ENCODE measurements at regions of chr1 and their contacts with region 1.

Region 1: GRCh38 chr1:176178316-176178715 is 28.8 kb downstream of the COP1 start:
- DNase-seq: peak; percentile 12
- H3K4me3 ChIP-seq: no peak overlapping the region
- H3K27ac ChIP-seq: no peak overlapping the region
- H3K4me1 ChIP-seq: peaks cover 8% of the 10 kb centered on the region
- H3K27me3 ChIP-seq: no peaks in the 10 kb centered on the region
- CTCF ChIP-seq: no peak

Region 2: DNA sequence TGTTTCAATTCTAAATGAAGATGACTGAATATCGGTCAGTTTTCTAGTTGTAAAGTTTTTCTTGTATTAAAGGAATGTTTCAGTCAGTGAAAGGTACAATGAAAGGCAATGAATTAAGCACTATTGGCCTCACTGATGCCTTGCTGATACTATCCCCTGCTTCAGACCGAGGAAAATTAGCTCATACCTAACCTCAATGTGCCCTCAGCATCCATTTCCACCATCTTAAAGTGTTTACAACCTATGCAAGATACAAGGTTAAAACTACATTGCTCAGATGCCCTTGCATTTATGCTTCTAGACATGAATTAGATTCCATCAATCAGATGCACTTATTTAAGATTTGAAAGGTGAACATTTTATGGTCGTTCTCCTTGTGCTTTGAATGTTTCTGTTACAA is 155.7 kb before region 1 on chr1:
- CTCF ChIA-PET with region 1: no interaction called
- dilution Hi-C with region 1: no loop called
- in situ Hi-C with region 1: no loop called
- intact Hi-C with region 1: no loop called
- DNase-seq: no peak
- H3K4me3 ChIP-seq: no peak overlapping the region
- H3K27ac ChIP-seq: no peak overlapping the region
- H3K4me1 ChIP-seq: no peaks in the 10 kb centered on the region
- H3K27me3 ChIP-seq: no peaks in the 10 kb centered on the region
- CTCF ChIP-seq: no peak

Region 3: DNA sequence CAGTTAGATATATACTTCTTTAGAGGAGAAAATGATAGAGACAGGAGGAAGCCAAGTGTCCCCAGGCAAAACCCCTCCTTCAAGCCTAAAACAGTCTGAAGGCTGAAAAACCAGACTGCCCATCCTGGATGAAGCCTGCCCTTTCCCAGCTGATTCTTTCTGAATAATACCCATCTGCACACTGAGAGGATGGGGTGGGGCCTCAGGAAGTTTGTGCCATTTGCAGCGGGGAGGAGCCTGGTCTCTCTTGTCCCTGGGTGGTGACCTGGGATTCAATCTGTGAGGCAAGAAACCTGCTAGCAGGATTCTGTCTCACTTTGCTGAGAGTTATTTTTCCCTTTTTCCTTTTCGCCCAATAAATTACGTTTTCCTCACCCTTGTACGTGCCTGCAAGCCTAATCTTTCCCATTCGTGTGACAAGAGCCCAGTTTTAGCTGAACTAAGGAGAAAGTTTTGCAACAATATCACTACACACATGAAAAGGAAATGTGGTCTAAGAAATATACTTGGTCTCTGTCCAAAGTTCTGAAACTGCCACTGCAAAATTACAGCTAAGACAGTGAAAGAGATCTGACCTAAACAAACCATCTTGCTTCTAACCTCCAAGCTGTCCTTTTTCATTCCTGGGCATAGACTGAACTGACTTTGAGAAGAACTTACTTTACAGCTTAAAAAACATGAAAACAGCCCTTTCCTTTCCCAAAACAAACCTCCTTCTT is 76.2 kb before region 1 on chr1:
- CTCF ChIA-PET with region 1: interaction called, 15 read pairs
- dilution Hi-C with region 1: no loop called
- in situ Hi-C with region 1: no loop called
- intact Hi-C with region 1: no loop called
- DNase-seq: no peak
- H3K4me3 ChIP-seq: no peak overlapping the region
- H3K27ac ChIP-seq: no peak overlapping the region
- H3K4me1 ChIP-seq: no peaks in the 10 kb centered on the region
- H3K27me3 ChIP-seq: no peaks in the 10 kb centered on the region
- CTCF ChIP-seq: no peak

Measured in mammary epithelial cell (primary cell).